Lower leg skin (tissue), 4 donors: ENCODE measurements at regions of chr1 and their contacts with region 1.

Region 1: GRCh38 chr1:207084701-207085180 is 3.9 kb upstream of the C4BPB start:
- DNase-seq: peak in 1 of 2 donors; percentile 34
- H3K4me3 ChIP-seq: no peak overlapping the region
- CTCF ChIP-seq: peak in 1 of 3 donors; percentile 67
- POLR2A ChIP-seq: no peak

Region 2: DNA sequence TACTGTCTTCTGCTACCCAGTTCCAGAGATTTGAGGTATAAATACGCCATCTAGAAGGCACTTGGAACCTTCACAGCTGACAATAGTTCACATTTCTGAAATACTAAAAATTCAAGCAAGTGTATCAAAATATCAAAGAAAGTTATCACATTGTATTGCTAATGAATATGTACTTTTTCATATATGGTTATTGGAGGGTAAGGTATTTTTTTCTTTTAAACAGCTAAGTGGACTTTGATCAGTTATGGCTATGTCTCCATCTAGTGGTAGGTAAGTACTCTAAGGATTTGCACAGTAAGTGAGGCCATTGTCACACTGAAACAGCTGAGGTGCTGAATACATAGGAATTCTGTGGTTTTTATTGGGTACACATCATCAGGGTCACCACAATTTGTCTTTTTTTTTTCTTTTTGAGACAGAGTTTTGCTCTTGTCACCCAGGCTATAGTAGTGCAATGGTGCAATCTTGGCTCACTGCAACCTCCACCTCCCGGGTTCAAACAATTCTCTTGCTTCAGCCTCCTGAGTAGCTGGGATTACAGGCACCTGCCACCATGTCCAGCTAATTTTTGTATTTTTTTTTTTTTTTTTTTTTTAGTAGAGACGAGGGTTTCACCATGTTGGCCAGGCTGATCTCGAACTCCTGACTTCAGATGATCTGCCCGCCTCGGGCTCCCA is 320.2 kb after region 1 on chr1:
- intact Hi-C with region 1: loop called (anchors 10 kb)
- DNase-seq: no peak
- H3K4me3 ChIP-seq: no peak overlapping the region
- CTCF ChIP-seq: no peak
- POLR2A ChIP-seq: no peak